Dendritic cell treated with granulocyte-macrophage colony-stimulating factor and Interleukin-4, amounts not matched to agents 40 ng/mL and 50 ng/mL, for 4 days (primary cell): ENCODE measurements at regions of chr12 and their contacts with region 1.

Region 1: GRCh38 chr12:47397664-47398281 is 308.1 kb downstream of the RPAP3 start:
- H3K4me3 Mint-ChIP-seq: no peak overlapping the region
- H3K27ac Mint-ChIP-seq: peak overlapping the region; percentile 15
- H3K4me1 Mint-ChIP-seq: peaks cover 55% of the 10 kb centered on the region
- H3K27me3 Mint-ChIP-seq: no peaks in the 10 kb centered on the region

Region 2: GRCh38 chr12:47079981-47080791 is 317.6 kb before region 1 on chr12:
- intact Hi-C with region 1: loop called (anchors 5 kb)
- H3K4me3 Mint-ChIP-seq: peak overlapping the region; percentile 84
- H3K27ac Mint-ChIP-seq: peak overlapping the region; percentile 58
- H3K4me1 Mint-ChIP-seq: peaks cover 49% of the 10 kb centered on the region
- H3K27me3 Mint-ChIP-seq: peaks cover 16% of the 10 kb centered on the region

Region 3: DNA sequence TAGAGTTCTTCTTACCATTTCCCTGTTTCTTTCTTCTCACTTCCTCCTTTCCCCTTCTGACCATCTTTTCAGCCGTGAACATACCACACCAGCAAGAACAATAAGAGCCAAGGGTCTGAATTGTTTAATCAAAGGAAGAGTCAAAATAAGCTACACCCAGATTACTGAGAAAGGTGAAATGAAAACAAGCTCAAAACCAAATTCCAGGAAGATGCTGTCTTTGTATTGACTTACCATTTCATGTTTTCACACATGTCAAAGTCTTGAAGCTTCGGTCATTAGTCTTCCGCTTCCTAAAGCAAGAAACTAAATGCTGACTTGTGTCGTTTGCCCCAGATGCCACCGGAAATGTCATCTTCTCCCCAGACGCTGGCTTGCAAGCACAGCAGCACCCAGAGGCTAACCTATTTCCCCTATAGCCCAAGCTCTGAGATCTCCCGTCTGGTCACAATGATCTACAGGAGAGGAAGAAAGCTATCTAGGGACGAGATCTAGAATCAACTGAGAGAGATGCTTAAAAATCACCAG is 181.6 kb before region 1 on chr12:
- intact Hi-C with region 1: loop called (anchors 5 kb)
- H3K4me3 Mint-ChIP-seq: peak overlapping the region; percentile 64
- H3K27ac Mint-ChIP-seq: peak overlapping the region; percentile 85
- H3K4me1 Mint-ChIP-seq: peaks cover 48% of the 10 kb centered on the region
- H3K27me3 Mint-ChIP-seq: no peaks in the 10 kb centered on the region

Region 4: GRCh38 chr12:47307680-47308399 is 89.9 kb before region 1 on chr12:
- intact Hi-C with region 1: loop called (anchors 5 kb)
- H3K4me3 Mint-ChIP-seq: peak overlapping the region; percentile 75
- H3K27ac Mint-ChIP-seq: peak overlapping the region; percentile 80
- H3K4me1 Mint-ChIP-seq: peaks cover 29% of the 10 kb centered on the region
- H3K27me3 Mint-ChIP-seq: peaks cover 11% of the 10 kb centered on the region

Region 5: DNA sequence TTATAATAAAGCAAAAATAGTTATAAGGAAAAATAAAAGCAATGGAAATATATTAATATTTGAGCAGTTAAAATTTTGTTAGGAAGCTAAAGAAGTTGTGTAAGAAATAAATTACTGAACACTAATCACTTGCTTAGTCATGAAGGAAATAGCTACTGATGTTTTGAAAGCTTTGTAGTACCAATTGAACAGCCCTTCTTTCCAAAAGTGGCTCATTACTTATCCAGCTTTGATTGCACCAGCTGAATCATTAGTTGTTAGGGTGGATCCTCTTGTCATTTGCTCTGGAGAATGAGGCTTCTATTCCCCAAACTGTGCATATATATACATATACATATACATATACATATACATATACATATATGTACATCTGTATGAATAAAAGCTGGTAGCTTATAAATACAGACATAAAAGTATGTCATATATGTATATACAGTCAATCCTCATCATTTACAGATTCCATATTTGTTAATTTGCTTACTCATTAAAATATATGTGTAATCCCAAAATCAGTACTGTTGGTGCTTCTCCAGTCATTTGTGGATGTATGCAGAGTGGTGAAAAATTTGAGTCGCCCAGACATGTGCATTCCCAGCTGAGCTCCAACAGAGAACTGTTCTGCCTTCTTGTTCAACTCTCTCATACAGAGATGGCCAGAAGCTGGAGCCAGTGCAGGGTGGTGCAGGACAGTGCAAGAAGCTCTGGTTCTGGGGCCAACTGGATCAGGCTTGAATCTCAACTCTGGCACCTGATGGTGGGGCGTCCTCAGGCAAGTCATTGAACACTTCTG is 93.9 kb after region 1 on chr12:
- intact Hi-C with region 1: no loop called
- H3K4me3 Mint-ChIP-seq: no peak overlapping the region
- H3K27ac Mint-ChIP-seq: no peak overlapping the region
- H3K4me1 Mint-ChIP-seq: no peaks in the 10 kb centered on the region
- H3K27me3 Mint-ChIP-seq: peaks cover 4% of the 10 kb centered on the region